ENCODE measurements at regions of chr11 and their contacts with region 1.

Region 1: DNA sequence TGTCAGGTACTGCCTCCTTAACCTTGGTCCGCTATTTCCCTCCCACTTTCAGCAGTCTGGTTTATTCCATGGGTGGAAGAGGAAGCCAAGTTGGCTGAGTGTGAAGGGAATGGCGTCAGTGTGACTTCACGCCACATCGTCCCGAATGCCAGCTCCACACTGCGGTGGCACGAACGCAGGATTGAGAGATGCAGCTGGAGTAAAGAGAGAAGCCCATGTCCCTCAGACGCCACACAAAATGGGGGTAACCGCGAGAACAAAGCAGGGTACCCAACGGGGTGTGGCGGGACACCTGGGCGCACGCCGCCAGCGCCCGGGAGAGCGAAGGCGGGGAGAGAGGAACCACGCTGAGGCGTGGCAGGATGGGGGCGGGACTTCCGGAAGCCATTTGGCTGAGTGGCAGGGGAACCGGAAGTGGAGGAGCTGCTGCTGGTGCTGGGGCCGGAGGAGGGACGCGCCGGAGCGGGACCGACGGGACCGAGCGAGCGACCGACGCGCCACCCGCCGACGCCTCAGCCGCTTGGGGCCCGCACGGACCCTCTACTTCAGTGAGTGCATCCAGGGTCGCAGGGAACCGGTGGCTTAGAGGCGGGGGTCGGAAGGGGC is at the start of gene PAFAH1B2:
- DNase-seq: peak; percentile 88 to 92
- H3K4me3 ChIP-seq: peak within 1 kb of the TSS; percentile 85
- H3K27ac ChIP-seq: peak within 1 kb of the TSS; percentile 44
- H3K4me1 ChIP-seq: peaks cover 13% of the 10 kb centered on the region
- H3K27me3 ChIP-seq: no peaks in the 10 kb centered on the region
- CTCF ChIP-seq: no peak
- total RNA-seq, gene PAFAH1B2: 83.7 and 91.3 TPM in 2 replicates

Region 2: DNA sequence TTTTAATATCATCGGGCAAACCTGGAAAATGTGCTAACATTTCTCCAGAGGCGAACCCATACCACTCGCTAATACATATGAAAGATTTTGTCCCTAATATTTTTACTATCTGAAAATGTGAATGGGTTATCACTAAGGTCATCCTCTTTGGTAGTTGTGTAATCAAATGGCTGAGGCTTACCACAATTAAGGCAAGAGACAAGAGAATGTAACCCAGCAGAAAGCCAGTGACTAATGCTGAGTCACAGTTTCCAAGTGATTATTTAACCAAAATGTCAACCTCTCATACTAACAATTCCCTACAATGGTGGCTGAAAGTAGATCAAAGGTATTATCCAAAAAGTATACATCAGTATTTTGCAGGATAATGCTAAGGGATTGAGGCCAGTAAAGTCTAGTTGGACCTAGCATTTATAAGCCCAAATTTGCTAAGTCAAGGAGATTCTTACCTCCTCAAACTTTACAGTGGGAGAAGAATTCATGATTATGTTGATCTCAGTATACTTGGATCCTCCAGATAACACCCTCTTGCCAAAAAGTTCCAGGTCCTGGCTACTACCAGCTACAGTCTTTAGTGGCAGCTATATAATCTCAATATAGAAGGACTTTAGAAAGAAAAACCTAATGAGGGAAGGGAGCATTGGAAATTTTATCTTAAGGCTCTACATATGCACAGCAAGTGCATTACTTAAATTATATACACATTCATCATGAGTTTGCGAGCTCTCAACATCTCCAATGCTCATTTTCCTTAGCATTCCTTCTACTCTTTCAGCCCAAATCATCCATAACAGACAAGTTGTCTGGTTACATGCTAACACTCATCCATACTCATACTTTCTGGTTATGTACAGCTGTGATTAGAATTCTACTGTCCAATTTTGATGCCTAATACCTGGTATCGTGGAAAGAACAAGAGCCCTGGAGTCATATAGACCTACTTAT is 71.2 kb before region 1 on chr11:
- CTCF ChIA-PET with region 1: no interaction called
- POLR2A ChIA-PET with region 1: interaction called, 4 read pairs
- intact Hi-C with region 1: loop called (anchors 2 kb)
- DNase-seq: peak; percentile 38 to 98
- H3K4me3 ChIP-seq: no peak overlapping the region
- H3K27ac ChIP-seq: peak overlapping the region; percentile 87
- H3K4me1 ChIP-seq: peaks cover 72% of the 10 kb centered on the region
- H3K27me3 ChIP-seq: no peaks in the 10 kb centered on the region
- CTCF ChIP-seq: no peak

Region 3: DNA sequence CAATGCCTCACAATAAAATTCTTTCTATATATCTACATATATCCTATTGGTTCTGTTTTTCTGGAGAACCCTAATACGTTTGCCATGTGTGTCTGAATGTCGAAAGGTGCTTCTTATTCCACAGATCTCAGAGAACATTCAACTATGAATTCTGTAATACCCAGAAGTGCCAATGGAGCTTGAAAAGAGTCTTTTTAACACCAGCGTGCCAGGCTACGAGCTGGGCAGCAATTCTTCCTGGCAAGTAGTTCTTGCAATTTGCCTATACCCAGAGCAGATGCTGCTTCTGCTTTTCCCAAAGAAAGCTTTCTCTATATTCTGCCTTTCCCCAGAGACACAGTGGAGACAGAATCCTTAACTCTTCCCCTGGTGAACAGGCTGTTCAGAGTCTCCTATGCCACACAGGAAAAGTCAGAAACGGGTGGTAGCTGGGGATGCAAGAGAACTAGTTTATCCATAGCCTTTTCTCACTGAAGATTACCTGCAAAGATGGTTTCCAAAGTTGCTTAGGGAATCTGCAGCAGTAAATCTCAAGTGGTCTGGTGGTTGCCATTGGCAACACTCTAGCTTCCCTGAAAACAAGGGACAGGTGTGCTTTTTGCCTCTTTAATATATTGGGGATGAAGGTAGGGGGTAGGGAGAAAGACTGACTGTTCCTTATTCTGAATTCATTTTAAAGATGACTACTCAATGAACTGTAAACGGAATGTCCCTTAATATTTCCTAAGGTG is 16.6 kb before region 1 on chr11:
- CTCF ChIA-PET with region 1: no interaction called
- POLR2A ChIA-PET with region 1: no interaction called
- intact Hi-C with region 1: loop called (anchors 2 kb)
- DNase-seq: no peak
- H3K4me3 ChIP-seq: no peak overlapping the region
- H3K27ac ChIP-seq: no peak overlapping the region
- H3K4me1 ChIP-seq: no peaks in the 10 kb centered on the region
- H3K27me3 ChIP-seq: no peaks in the 10 kb centered on the region
- CTCF ChIP-seq: no peak

Region 4: DNA sequence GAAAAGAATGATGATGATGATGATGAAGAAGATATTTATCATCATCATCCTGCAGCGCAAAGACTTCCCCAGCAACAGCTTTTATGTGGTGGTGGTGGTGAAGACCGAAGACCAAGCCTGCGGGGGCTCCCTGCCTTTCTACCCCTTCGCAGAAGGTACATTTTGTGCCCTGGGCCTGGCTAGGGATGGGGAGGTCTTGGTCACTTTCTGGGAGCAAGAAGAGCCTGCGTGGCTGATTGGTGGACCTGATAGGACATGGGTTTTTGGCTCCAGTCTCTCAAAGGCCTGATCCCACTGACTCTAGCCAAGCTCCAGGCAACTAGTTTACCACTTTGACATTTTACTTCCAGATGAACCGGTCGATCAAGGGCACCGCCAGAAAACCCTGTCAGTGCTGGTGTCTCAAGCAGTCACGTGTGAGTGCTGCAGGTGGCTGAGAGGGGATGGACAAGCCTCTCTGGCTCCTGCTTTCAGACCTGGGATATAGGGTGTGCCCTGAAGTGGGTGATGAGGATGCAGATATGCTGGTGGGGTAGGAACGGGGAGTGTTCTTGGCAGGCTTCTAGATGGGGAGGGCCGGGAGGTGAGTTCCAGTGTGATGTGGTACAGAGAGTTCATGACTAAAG is 39.9 kb after region 1 on chr11:
- CTCF ChIA-PET with region 1: no interaction called
- POLR2A ChIA-PET with region 1: interaction called, 24 read pairs
- intact Hi-C with region 1: no loop called
- DNase-seq: no peak
- H3K4me3 ChIP-seq: no peak overlapping the region
- H3K27ac ChIP-seq: no peak overlapping the region
- H3K4me1 ChIP-seq: peaks cover 8% of the 10 kb centered on the region
- H3K27me3 ChIP-seq: no peaks in the 10 kb centered on the region
- CTCF ChIP-seq: no peak

Region 5: DNA sequence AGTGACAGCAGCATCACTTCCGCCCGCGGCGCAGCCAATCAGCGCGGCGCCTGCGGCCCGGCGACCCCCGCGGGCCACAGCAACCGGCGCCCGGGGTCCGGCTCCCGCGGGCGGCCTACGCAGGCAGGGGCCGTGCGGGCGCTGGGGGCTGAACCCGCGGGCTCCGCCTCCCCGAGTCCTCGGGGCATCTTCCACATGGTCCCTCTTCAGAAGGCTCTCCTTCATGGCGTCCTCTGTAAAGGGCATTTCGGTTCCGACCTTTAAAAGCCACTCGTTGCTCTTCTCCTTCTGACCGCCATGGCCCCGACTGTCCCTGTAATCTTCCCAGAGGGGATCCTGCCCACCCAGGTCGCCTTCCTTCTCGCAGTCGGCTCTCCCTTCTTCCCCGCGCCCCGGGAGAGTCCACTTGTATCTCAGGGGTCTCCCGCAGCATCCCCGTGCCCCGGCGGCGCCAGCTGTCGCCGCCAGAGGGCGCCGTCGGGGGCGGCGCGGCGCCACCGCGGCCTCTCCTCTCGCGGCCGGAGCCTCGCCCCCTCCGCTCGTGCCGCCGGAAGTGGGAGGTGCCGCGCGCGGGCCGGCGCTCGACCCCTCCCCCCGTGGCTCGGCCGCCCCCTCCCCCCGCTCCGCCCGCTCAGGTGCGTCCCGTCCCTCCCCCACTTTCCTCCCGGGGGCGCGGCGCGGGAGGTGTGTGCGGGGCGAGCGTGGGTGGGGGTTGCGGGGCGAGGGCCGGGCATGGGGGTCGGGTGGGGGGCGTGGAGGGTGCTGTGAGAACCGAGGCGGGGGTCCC is 88.3 kb after region 1 on chr11 and contains the start of gene RNF214:
- CTCF ChIA-PET with region 1: no interaction called
- POLR2A ChIA-PET with region 1: interaction called, 11 read pairs
- intact Hi-C with region 1: no loop called
- DNase-seq: peak; percentile 51 to 73
- H3K4me3 ChIP-seq: peak within 1 kb of the TSS; percentile 99
- H3K27ac ChIP-seq: no peak within 1 kb of the TSS
- H3K4me1 ChIP-seq: peaks cover 25% of the 10 kb centered on the region
- H3K27me3 ChIP-seq: no peaks in the 10 kb centered on the region
- CTCF ChIP-seq: peak; percentile 92
- total RNA-seq, gene RNF214: 27.2 and 28.1 TPM in 2 replicates

Region 6: GRCh38 chr11:117248341-117248740 is 104.4 kb after region 1 on chr11:
- CTCF ChIA-PET with region 1: no interaction called
- POLR2A ChIA-PET with region 1: interaction called, 17 read pairs
- intact Hi-C with region 1: no loop called
- DNase-seq: no peak
- H3K4me3 ChIP-seq: no peak overlapping the region
- H3K27ac ChIP-seq: no peak overlapping the region
- H3K4me1 ChIP-seq: no peaks in the 10 kb centered on the region
- H3K27me3 ChIP-seq: no peaks in the 10 kb centered on the region
- CTCF ChIP-seq: no peak

Region 7: DNA sequence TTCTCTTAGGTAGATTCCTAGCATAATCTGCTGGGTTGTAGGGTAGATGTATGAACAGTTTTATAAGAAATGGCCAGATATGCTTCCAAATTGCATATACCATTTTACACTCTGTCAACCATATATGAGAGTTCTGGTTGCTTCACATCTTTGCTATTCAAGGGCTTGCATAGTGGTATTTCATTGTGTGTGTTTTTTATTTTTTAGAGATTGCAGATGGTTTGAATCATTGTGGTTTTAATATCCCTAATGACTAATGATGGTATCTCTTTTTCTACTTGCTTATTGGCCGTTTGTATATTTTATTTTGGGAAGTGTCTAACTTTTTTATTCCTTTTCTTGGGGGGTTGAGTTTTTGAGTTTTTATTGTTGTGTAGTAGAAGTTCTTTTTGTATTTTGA is 115.4 kb after region 1 on chr11:
- CTCF ChIA-PET with region 1: no interaction called
- POLR2A ChIA-PET with region 1: interaction called, 22 read pairs
- intact Hi-C with region 1: no loop called
- DNase-seq: no peak
- H3K4me3 ChIP-seq: no peak overlapping the region
- H3K27ac ChIP-seq: no peak overlapping the region
- H3K4me1 ChIP-seq: no peaks in the 10 kb centered on the region
- H3K27me3 ChIP-seq: no peaks in the 10 kb centered on the region
- CTCF ChIP-seq: no peak

Region 8: DNA sequence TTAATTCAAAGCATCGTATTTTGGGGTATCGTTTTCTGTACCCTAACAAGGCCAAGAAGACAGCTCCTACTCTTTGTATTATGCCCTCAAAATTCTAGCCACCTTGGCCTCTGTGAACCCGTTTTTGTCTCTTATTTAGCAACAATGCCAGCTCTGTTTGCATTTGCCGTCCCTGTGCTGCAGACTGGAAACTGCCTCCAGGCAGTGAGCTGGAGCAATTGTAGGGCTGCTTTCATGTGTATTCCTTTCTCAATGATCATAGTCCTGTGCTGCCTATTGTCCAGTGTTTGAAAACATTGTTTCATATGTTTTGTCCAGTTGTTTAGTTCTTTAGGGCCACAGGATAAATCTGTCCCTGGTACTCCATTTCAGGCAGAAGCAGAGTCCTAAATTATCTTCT is 127.2 kb after region 1 on chr11:
- CTCF ChIA-PET with region 1: no interaction called
- POLR2A ChIA-PET with region 1: no interaction called
- intact Hi-C with region 1: no loop called
- DNase-seq: no peak
- H3K4me3 ChIP-seq: no peak overlapping the region
- H3K27ac ChIP-seq: no peak overlapping the region
- H3K4me1 ChIP-seq: no peaks in the 10 kb centered on the region
- H3K27me3 ChIP-seq: no peaks in the 10 kb centered on the region
- CTCF ChIP-seq: no peak

Region 9: DNA sequence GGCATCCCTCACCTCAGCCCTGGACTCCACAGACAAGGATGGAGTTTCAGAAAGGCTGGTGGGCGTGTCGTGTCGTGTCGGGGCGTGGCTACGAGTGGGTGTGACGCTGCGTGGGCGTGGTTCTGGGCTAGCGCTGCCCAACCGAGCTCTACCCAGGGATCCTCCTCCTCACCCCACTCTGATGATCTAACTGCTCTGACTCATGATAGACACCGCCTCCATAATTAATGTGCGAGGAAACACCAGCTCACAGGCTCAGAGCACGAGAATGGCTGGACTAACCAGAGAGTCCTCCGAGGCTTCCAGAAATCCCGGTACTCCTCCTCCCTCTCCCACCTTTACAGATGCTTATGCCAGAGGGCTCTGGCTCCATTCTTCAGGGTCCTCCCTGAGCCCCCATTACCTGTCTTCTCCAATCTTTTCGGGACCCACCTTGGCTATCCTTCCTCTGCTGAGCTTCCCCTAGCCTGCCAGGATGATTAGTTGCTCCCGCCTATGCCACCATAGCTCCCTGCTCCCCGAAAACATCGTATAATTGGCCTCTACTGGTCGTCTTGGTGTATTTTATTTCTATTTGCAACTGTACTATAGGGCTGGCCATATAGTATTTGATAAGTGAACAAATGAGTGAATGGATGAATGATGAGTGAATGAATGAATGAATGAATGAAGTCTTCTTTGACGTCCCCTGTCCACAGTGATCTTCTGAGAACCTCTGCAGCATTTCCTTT is 763.4 kb after region 1 on chr11:
- CTCF ChIA-PET with region 1: no interaction called
- POLR2A ChIA-PET with region 1: no interaction called
- intact Hi-C with region 1: no loop called
- DNase-seq: peak; percentile 94 to 95
- H3K4me3 ChIP-seq: peak overlapping the region; percentile 39; the same call in 1 of the 2 replicates
- H3K27ac ChIP-seq: peak overlapping the region; percentile 57
- H3K4me1 ChIP-seq: peaks cover 12% of the 10 kb centered on the region
- H3K27me3 ChIP-seq: no peaks in the 10 kb centered on the region
- CTCF ChIP-seq: no peak

Measured in PC-9 (cell line).